Upper lobe of right lung (tissue), 1 donor: ENCODE measurements at regions of chr1 and their contacts with region 1.

Region 1: DNA sequence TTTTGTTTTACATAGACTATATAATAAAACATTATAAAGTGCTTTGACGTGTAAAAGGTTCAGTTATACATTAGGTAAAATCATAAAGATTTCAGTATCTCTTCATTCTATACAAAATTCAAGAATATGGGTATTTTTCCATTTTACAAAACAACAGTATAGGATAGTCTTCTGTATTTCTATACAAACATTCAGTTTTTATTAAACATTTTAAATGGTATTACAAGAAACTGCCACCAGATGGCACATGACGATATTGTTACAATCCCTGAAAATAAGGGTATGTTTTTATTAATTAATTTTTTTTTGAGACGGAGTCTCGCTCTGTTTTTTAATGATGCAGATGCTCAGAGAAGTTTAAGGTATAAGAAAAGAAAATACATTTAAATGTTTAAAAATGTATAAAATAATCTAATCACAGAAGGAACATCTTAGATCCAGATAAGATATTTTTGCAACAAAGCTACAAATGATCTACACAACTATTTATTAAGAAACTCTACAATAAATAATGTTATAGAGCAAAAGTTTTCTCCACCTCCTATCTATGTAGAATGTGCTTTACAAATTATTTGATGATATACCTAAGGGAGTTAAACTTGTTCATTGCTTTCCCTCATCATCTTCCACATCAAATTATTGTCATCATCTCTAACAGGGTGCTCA is 23.5 kb upstream of the RSBN1 start:
- DNase-seq: no peak
- ATAC-seq: peak; percentile 61
- H3K4me3 ChIP-seq: no peak overlapping the region
- H3K27ac ChIP-seq: no peak overlapping the region
- H3K4me1 ChIP-seq: no peaks in the 10 kb centered on the region
- H3K27me3 ChIP-seq: no peaks in the 10 kb centered on the region
- CTCF ChIP-seq: peak; percentile 66

Region 2: DNA sequence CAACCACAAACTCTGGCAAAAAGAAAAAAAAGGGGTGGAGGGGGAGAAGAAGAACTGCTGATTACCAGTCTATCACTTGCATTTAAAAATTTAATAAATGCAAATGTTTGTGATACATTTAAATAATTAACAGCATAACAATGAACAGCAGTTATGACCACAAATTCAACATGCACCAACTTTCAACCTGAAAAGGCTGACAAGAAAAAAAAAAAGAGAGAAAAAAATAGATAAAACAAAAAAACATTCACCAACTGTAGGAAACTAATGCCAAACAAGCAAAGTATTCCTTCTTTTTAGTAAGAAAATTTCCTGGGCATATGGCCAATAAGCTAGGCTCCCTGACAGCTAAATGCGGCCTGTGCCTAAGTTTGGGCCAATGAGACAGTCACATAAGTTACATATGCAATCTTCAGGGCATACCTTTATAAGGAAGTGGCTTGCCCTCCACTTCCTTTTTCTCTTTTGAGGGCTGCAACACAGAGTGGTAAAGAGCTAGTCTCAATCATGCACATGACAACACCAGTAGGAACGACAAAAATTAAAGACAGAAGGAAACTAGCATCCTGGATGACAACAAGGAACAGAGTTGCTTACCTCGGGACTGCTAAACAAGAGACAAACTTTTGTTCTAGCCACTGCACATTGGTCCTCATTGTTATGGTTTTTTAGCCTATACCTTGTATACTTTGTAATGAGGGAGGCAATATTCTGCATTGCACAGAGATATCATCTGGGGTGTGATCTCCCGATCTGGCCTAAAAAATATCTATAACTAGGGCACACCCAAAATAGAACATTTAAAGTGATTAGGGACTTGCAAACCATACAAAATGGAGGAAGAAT is 52.3 kb before region 1 on chr1:
- intact Hi-C with region 1: no loop called
- DNase-seq: no peak
- ATAC-seq: peak; percentile 94
- H3K4me3 ChIP-seq: no peak overlapping the region
- H3K27ac ChIP-seq: peak overlapping the region; percentile 71
- H3K4me1 ChIP-seq: peaks cover 49% of the 10 kb centered on the region
- H3K27me3 ChIP-seq: no peaks in the 10 kb centered on the region
- CTCF ChIP-seq: no peak

Region 3: DNA sequence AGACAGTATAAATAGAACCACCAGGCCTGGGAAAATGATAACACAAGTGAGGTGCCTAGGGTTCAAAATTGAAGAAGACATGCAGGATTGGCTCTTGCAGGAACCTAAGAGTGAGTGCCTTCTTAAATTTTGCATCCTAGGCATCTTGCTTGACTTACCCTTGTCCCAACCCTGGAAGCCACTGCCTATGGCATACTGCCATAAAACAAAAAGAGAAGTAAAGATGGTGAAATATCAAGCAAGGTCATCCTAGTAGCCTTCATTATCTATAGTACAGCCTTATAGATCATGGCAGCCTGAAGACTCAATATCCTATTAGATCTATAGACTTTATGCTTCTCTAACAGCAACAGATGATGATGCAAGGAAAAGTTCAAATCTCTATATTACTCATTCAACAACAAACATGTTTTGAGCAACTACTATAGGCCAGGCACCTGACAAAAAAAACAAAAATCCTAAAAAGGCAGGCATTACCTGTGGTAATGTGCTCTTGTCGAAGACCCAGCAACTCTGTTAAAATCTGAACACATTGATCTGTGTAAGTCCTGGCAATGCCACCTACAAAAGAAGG is 62.6 kb after region 1 on chr1:
- intact Hi-C with region 1: loop called (anchors 10 kb)
- DNase-seq: no peak
- ATAC-seq: peak; percentile 53
- H3K4me3 ChIP-seq: no peak overlapping the region
- H3K27ac ChIP-seq: no peak overlapping the region
- H3K4me1 ChIP-seq: peaks cover 8% of the 10 kb centered on the region
- H3K27me3 ChIP-seq: no peaks in the 10 kb centered on the region
- CTCF ChIP-seq: no peak

Region 4: GRCh38 chr1:113940365-113941244 is 104.8 kb after region 1 on chr1:
- intact Hi-C with region 1: no loop called
- DNase-seq: no peak
- ATAC-seq: no peak
- H3K4me3 ChIP-seq: no peak overlapping the region
- H3K27ac ChIP-seq: peak overlapping the region; percentile 7
- H3K4me1 ChIP-seq: peaks cover 29% of the 10 kb centered on the region
- H3K27me3 ChIP-seq: no peaks in the 10 kb centered on the region
- CTCF ChIP-seq: no peak

Region 5: GRCh38 chr1:114215436-114215835 is 379.7 kb after region 1 on chr1:
- intact Hi-C with region 1: no loop called
- DNase-seq: no peak
- ATAC-seq: no peak
- H3K4me3 ChIP-seq: no peak overlapping the region
- H3K27ac ChIP-seq: no peak overlapping the region
- H3K4me1 ChIP-seq: no peaks in the 10 kb centered on the region
- H3K27me3 ChIP-seq: no peaks in the 10 kb centered on the region
- CTCF ChIP-seq: no peak